ENCODE measurements at regions of chr5 and their contacts with region 1.

Region 1: DNA sequence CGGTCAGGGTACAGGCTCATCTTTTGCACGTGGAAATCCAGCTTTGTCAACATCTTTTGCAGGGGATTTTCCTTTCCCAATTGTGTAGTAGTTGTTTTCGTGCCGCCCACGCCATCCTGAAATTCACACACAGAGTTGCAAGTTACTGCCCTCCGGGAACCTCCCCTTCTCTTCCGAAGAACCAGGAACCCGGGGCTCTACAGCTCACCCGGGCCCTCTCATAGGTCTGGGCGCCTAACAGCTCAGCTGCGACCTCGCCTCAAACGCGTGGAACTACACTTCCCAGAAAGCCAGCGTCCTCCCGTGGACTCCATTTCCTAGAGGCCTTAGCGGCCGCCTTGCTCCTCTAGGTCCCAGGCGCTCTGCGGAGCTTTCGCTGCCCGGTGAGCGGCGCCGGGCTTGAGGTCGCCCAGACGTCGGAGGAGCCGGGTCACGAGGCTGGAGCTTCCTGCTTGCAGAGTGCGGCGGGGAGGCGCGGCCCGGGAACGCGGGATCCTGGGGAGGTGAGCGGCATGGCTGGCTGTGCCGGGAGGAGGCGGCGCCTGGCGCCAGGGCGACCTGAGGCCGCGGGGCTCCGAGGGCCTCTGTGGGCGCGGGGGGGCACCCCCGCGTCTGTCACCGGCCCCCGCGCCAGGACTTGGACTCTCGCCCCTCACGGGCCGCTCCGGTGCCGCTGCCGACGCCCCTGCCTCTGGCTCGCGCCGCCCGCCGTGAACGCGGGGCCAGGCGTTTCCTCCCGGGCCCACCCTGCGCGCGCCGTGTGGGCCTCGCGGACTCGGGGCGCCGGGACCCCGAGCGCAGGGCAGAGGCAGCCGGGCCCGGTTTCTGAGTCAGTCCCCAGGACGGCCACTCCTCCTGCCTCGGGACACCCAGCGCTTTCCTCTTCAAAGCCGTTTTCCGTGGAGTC is at the start of gene ZNF354B:
- DNase-seq: peak; percentile 76
- ATAC-seq: peak; percentile 98
- H3K4me3 ChIP-seq: peak within 1 kb of the TSS; percentile 73
- H3K27ac ChIP-seq: 0 out of 2 replicates have a peak within 1 kb of the TSS, but pooled peaks have one; percentile 4
- H3K4me1 ChIP-seq: no peaks in the 10 kb centered on the region
- H3K27me3 ChIP-seq: no peaks in the 10 kb centered on the region
- CTCF ChIP-seq: peak in 2 of 3 experiments; percentile 6 to 10; a peak in 1 of 6 replicates
- EP300 ChIP-seq: no peak
- POLR2A ChIP-seq: peak; percentile 87
- RAD21 ChIP-seq: no peak
- polyA plus RNA-seq, gene ZNF354B: 0.64 to 1.2 TPM

Region 2: GRCh38 chr5:178732281-178732680 is 127.6 kb before region 1 on chr5:
- CTCF ChIA-PET with region 1: interaction called, 13 read pairs
- POLR2A ChIA-PET with region 1: interaction called, 5 read pairs
- RAD21 ChIA-PET with region 1: interaction called, 17 read pairs
- SMC1A ChIA-PET with region 1: interaction called, 9 read pairs
- in situ Hi-C with region 1: no loop called
- intact Hi-C with region 1: loop called (anchors 1 kb)
- DNase-seq: no peak
- ATAC-seq: no peak
- H3K4me3 ChIP-seq: no peak overlapping the region
- H3K27ac ChIP-seq: no peak overlapping the region
- H3K4me1 ChIP-seq: no peaks in the 10 kb centered on the region
- H3K27me3 ChIP-seq: no peaks in the 10 kb centered on the region
- CTCF ChIP-seq: no peak
- EP300 ChIP-seq: no peak
- POLR2A ChIP-seq: no peak
- RAD21 ChIP-seq: no peak

Region 3: GRCh38 chr5:178832618-178833201 is 27.2 kb before region 1 on chr5:
- CTCF ChIA-PET with region 1: no interaction called
- POLR2A ChIA-PET with region 1: no interaction called
- RAD21 ChIA-PET with region 1: no interaction called
- SMC1A ChIA-PET with region 1: no interaction called
- in situ Hi-C with region 1: no loop called
- intact Hi-C with region 1: no loop called
- DNase-seq: no peak
- ATAC-seq: no peak
- H3K4me3 ChIP-seq: no peak overlapping the region
- H3K27ac ChIP-seq: no peak overlapping the region
- H3K4me1 ChIP-seq: no peaks in the 10 kb centered on the region
- H3K27me3 ChIP-seq: no peaks in the 10 kb centered on the region
- CTCF ChIP-seq: no peak
- EP300 ChIP-seq: no peak
- POLR2A ChIP-seq: no peak
- RAD21 ChIP-seq: no peak